Sciatic nerve (tissue), 2 donors: ENCODE measurements at regions of chr18 and their contacts with region 1.

Region 1: GRCh38 chr18:60784161-60784560 is 411.6 kb upstream of the MC4R start:
- DNase-seq: no peak
- ATAC-seq: no peak

Region 2: DNA sequence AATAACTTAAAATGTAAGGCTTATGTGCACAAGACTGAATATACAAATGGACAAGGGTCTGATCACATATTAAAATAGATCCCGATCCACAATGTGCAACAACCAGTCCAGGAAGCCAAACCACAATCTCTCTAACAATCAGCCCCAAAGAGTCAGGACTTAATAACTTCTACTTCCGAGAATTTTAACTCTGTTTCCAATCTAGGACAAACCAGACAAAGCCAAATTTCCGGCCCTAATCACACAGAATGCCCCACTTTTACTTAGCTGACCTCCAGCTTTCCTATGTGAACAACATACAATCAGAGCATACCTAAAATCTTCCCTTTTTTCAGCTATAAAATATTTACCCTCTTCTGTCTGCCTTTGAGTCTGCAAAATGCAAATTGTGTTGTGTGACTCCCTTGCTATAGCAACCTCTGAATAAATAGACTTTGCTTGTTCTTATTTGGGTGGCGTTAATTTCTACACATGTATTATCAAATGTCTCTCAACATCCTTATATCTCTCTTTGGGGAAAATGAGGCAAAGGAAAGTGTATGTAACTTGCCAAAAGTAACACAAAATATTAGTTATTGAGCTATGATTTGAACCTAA is 29.6 kb before region 1 on chr18:
- intact Hi-C with region 1: loop called (anchors 2 kb)
- DNase-seq: no peak
- ATAC-seq: no peak